Activated B cell treated with CpG ODN at 0.5 μM for 24 hours (primary cell): ENCODE measurements at regions of chr20 and their contacts with region 1.

Region 1: GRCh38 chr20:38893565-38894090 is 32.6 kb upstream of the FAM83D start:
- DNase-seq: peak; percentile 76
- ATAC-seq: peak; percentile 77
- H3K4me3 Mint-ChIP-seq: peak overlapping the region; percentile 45
- H3K27ac Mint-ChIP-seq: peak overlapping the region; percentile 86
- H3K4me1 Mint-ChIP-seq: peaks cover 64% of the 10 kb centered on the region
- H3K27me3 Mint-ChIP-seq: no peaks in the 10 kb centered on the region
- CTCF ChIP-seq: peak; percentile 78

Region 2: DNA sequence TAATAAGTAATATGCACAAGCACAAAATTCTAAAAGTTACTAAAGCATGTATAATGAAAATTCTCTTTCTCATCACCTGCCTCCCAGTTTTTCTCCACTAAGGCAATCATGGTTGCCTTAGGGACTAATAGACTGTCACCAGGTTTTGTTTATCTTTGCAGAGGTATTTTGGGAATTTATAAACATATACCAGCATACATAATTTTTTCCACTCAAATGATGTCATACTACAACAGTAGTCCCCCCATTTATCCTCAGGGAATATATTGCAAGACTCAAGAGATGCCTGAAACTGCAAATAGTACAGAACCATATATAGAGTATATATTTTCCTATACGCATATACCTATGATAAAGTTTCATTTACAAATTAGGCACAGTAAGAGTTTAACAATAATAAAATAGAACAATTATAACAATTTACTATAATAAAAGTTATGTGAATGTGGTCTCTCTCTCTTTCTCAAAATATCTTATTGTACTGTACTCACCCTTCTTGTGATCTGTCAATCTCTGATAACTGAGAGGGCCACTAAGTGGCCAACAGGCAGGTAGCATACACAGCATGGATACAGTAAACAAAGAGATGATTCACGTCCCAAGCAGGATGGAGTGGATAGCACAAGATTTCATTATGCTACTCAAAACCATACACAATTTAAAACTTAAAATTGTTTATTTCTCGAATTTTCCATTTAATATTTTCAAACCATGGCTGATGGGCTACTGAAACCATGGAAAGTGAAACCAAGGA is 1817.5 kb before region 1 on chr20:
- CTCF ChIA-PET with region 1: no interaction called
- POLR2A ChIA-PET with region 1: interaction called, 17 read pairs
- intact Hi-C with region 1: no loop called
- DNase-seq: no peak
- ATAC-seq: no peak
- H3K4me3 Mint-ChIP-seq: no peak overlapping the region
- H3K27ac Mint-ChIP-seq: no peak overlapping the region
- H3K4me1 Mint-ChIP-seq: peaks cover 23% of the 10 kb centered on the region
- H3K27me3 Mint-ChIP-seq: no peaks in the 10 kb centered on the region
- CTCF ChIP-seq: no peak

Region 3: GRCh38 chr20:38730989-38731737 is 162.5 kb before region 1 on chr20:
- CTCF ChIA-PET with region 1: interaction called, 8 read pairs
- POLR2A ChIA-PET with region 1: no interaction called
- intact Hi-C with region 1: loop called (anchors 1 kb)
- DNase-seq: peak; percentile 68
- ATAC-seq: peak; percentile 76
- H3K4me3 Mint-ChIP-seq: peak overlapping the region; percentile 65
- H3K27ac Mint-ChIP-seq: no peak overlapping the region
- H3K4me1 Mint-ChIP-seq: peaks cover 52% of the 10 kb centered on the region
- H3K27me3 Mint-ChIP-seq: peaks cover 88% of the 10 kb centered on the region
- CTCF ChIP-seq: peak; percentile 77

Region 4: DNA sequence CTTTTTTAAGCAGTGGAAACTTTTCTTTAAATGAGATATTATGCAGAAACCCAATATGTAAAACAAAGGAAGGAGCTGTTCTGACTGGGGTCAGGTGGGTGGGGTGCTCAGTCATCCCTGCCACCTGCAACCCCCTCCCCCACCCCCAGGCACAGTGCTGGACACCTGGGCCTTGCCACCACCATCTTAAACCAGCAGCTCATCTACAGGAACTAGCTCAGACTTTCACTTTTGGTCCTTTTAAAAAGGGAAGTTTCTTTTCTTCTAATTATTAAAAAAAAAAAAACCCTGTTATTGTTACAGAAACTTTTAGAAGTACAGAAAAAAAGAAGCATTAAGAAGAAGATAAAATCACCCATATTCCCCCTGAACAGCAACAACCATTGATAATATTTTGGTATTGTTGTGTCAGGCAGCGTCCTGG is 51.1 kb before region 1 on chr20:
- CTCF ChIA-PET with region 1: interaction called, 20 read pairs
- POLR2A ChIA-PET with region 1: interaction called, 47 read pairs
- intact Hi-C with region 1: loop called (anchors 1 kb)
- DNase-seq: peak; percentile 51
- ATAC-seq: peak; percentile 97
- H3K4me3 Mint-ChIP-seq: peak overlapping the region; percentile 75
- H3K27ac Mint-ChIP-seq: peak overlapping the region; percentile 97
- H3K4me1 Mint-ChIP-seq: peaks cover 93% of the 10 kb centered on the region
- H3K27me3 Mint-ChIP-seq: no peaks in the 10 kb centered on the region
- CTCF ChIP-seq: no peak

Region 5: DNA sequence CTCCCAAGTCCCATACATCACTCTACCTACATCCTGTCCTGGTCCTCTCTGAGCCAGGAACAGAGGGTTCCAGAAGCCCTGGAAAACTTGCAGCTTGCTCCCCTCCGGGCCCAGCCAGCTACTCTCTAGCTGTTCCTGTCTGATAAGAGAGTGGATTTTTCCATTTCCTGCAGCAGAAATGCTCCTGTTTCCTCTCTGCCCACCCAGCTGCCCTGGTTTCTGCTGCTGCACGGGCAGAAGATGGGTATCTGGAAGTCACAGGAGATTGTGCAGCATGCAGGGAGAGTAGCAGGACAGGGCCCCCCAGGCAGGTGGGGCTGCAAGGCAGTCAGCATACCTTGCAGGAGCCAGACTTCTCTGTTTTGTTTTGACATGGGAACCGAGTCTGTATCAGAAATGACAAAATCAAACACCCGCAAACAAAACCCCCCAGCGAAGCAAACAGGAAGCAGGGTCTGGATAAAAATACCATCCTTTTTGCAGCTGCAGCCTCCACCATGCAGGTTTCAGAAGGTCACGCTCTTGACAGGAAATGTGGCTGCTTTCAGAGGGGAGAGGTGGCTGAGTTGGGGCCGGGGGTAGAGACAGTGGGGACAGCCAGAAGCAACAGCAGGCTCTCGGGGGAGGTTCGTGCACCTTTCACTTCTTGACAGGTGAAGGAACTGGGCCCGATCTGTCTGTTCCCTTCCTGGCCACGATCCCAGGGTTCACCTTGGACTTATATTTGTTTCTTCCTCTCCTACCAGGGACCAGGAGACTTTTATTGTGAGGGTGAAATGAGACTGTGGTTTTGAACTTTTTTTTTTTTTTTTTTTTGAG is 18.2 kb before region 1 on chr20:
- CTCF ChIA-PET with region 1: interaction called, 48 read pairs
- POLR2A ChIA-PET with region 1: interaction called, 148 read pairs
- intact Hi-C with region 1: loop called (anchors 1 kb)
- DNase-seq: peak; percentile 60
- ATAC-seq: peak; percentile 63
- H3K4me3 Mint-ChIP-seq: peak overlapping the region; percentile 83
- H3K27ac Mint-ChIP-seq: peak overlapping the region; percentile 97
- H3K4me1 Mint-ChIP-seq: peaks cover 98% of the 10 kb centered on the region
- H3K27me3 Mint-ChIP-seq: no peaks in the 10 kb centered on the region
- CTCF ChIP-seq: no peak